Endothelial cell of umbilical vein (primary cell): ENCODE measurements at regions of chr4 and their contacts with region 1.

Region 1: GRCh38 chr4:54322818-54323417 is 93.8 kb downstream of the PDGFRA start:
- DNase-seq: peak; percentile 60
- H3K4me3 ChIP-seq: no peak overlapping the region
- H3K27ac ChIP-seq: no peak overlapping the region
- H3K4me1 ChIP-seq: no peaks in the 10 kb centered on the region
- H3K27me3 ChIP-seq: peaks cover 0 to 2% of the 10 kb centered on the region in 2 experiments
- CTCF ChIP-seq: peak; percentile 58 to 73
- POLR2A ChIP-seq: no peak

Region 2: GRCh38 chr4:54296548-54297203 is 26.2 kb before region 1 on chr4:
- CTCF ChIA-PET with region 1: interaction called, 10 read pairs
- POLR2A ChIA-PET with region 1: no interaction called
- dilution Hi-C with region 1: no loop called
- intact Hi-C with region 1: no loop called
- DNase-seq: peak; percentile 31
- H3K4me3 ChIP-seq: no peak overlapping the region
- H3K27ac ChIP-seq: no peak overlapping the region
- H3K4me1 ChIP-seq: no peaks in the 10 kb centered on the region
- H3K27me3 ChIP-seq: peaks cover 0 to 15% of the 10 kb centered on the region in 2 experiments
- CTCF ChIP-seq: no peak
- POLR2A ChIP-seq: no peak

Region 3: DNA sequence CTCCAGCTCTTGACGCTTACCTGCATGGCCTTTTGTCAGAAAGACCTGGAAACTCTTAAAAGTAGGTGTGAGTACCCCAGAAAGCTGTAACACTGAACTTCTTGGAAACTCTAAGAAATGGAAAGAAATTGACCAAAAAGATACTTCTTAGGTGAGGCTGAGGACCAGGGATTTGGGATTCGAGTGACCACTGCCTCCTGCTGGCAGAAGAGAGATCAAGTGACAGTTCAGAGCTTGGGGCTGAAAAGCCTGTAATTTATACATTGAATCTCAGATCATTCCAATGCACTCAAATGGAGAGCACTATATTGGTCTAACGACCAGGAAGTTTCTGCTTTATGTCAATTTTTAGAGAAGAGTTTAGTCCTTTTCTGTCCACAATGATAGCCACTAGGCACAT is 110.8 kb after region 1 on chr4:
- CTCF ChIA-PET with region 1: interaction called, 17 read pairs
- POLR2A ChIA-PET with region 1: no interaction called
- dilution Hi-C with region 1: no loop called
- intact Hi-C with region 1: loop called (anchors 1 kb)
- DNase-seq: peak; percentile 30
- H3K4me3 ChIP-seq: no peak overlapping the region
- H3K27ac ChIP-seq: no peak overlapping the region
- H3K4me1 ChIP-seq: no peaks in the 10 kb centered on the region
- H3K27me3 ChIP-seq: peaks cover 2 to 5% of the 10 kb centered on the region in 2 experiments
- CTCF ChIP-seq: peak; percentile 48 to 49
- POLR2A ChIP-seq: no peak

Region 4: GRCh38 chr4:54440394-54441136 is 117.6 kb after region 1 on chr4:
- CTCF ChIA-PET with region 1: interaction called, 35 read pairs
- POLR2A ChIA-PET with region 1: no interaction called
- dilution Hi-C with region 1: no loop called
- intact Hi-C with region 1: loop called (anchors 1 kb)
- DNase-seq: peak; percentile 42
- H3K4me3 ChIP-seq: no peak overlapping the region
- H3K27ac ChIP-seq: no peak overlapping the region
- H3K4me1 ChIP-seq: no peaks in the 10 kb centered on the region
- H3K27me3 ChIP-seq: peaks cover 0 to 7% of the 10 kb centered on the region in 2 experiments
- CTCF ChIP-seq: peak; percentile 30 to 34
- POLR2A ChIP-seq: no peak